AG04449 (cell line): ENCODE measurements at regions of chr20 and their contacts with region 1.

Region 1: DNA sequence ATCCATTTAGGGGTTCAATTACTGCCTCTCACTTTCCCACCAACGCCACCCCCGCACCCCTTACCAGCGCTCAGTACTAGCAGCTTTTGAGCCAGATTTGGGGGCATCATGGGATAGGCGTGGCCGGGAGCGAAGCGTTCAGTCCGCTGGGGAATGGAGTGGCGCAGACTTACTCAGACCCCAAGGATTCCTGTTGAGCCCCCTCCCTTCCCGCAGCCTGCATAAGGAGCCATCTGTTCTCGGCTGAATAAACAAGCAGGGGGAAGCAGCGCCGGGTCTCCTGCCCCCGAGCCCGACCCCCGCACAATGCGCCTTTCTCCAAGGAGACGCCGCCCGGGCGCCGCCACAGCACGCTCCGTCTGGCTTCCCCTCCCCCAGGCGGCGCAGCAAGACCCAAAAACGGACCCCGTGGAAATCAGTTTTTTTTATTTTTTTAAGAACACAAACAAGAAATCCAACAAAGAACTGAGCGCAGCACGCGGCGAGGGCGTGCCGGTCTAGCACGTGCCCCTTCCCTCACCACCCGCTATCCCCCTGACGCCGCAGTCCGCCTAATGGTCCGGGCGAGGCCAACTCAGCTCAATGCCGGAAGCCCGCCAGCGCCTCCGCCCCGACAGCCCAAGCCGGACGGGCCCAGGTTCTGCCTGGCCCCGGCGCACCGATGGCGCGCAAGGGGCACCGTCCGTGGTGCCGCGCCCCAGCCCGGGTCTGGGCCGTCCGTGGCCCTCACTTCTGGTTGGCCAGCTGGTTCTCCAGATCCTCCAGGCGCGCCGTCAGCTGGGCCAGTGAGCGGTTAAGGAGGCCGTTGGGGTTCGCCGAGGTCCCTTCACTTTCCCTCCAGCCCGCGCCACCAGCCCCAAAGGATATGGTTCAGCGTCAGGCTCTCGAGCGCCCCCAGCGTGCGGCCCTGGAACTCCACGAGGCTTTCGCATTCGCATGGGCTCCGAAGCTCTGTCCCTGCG is 13.3 kb upstream of the RBPJL start:
- DNase-seq: no peak
- H3K4me3 ChIP-seq: peak overlapping the region; percentile 61
- CTCF ChIP-seq: peak; percentile 98

Region 2: DNA sequence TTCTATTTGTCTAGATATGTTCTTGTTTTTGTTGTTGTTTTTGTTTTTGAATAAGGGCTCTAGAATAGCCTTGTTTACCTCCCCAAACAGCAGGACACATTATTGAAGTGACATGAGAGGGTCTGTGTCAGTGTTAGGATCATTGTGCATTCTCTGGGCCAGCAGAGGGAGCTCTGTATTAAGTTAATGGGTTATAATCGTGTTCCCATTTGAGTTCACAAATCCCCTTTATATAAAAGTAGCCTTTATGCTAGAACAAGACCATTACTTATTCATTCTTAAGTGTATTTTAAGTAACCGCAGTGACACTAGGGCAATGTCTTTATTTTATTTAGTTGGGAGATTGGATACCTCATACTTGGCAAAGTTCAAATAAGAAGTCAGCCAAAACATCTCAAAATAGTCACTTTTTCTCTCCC is 282.2 kb before region 1 on chr20:
- CTCF ChIA-PET with region 1: interaction called, 115 read pairs
- POLR2A ChIA-PET with region 1: no interaction called
- DNase-seq: no peak
- H3K4me3 ChIP-seq: no peak overlapping the region
- CTCF ChIP-seq: peak; percentile 54

Region 3: GRCh38 chr20:45095753-45096371 is 197.5 kb before region 1 on chr20:
- CTCF ChIA-PET with region 1: interaction called, 146 read pairs
- POLR2A ChIA-PET with region 1: no interaction called
- DNase-seq: peak; percentile 7
- H3K4me3 ChIP-seq: no peak overlapping the region
- CTCF ChIP-seq: peak; percentile 79

Region 4: DNA sequence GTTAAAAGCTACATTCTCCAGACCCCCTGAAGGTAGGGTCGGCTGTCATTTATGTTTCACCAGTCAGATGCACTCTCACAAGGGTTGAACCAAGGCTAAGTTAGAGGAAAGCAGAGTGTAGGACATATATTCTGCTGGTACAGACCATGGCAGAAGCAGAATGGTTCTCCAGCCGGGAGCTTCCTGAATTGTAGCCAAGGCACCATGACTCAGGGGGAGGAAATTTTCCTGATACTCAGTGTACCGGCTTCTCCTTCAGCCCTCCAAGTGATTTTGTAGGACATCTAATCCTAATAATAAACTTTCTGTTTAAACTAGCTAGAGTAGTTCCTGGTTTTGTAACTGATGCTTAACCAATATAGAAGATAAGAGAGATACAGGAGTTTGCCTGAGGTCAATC is 24.8 kb before region 1 on chr20:
- CTCF ChIA-PET with region 1: interaction called, 57 read pairs
- POLR2A ChIA-PET with region 1: no interaction called
- DNase-seq: no peak
- H3K4me3 ChIP-seq: no peak overlapping the region
- CTCF ChIP-seq: no peak

Region 5: DNA sequence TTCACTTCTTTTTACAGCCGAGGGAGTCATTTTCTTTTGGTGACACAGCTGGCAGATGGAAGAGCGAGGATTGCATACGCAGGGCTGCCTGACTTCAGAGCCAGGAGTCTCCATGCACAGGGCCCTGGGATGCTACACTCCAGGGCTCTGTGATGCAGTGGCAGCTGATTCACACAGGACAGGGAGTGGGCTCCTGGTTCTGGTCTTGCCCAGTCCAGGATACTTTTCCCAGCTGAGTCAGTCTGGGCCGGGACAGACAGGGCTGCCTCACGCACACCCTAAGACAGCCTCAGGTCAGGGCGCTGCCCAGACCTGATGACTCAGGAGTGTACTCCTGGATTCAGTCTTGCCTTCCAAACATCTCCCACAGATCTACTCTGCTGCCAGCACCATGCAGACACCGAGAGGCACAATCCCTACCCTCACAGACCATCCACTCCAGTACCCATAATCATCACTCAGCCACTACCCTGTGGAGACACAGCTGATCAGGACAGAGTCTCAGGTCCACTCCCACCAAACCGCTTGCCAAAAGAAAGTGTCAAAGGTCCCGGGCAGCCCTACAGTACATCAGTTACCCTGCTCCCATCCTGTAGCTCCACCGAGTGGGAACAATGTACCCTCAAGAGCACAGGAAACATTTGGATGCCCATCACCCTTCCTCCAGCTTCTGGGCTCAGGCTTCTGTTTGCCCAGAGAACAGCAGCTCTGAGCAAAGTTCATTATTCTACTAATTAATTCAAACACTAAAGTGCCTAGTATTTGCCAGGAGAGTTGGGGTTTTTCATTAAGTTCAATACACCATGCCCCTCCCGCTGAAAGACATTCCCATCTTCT is 43.4 kb after region 1 on chr20:
- CTCF ChIA-PET with region 1: interaction called, 10 read pairs
- POLR2A ChIA-PET with region 1: no interaction called
- DNase-seq: peak; percentile 77
- H3K4me3 ChIP-seq: no peak overlapping the region
- CTCF ChIP-seq: no peak

Region 6: GRCh38 chr20:45347297-45347935 is 54.1 kb after region 1 on chr20:
- CTCF ChIA-PET with region 1: no interaction called
- POLR2A ChIA-PET with region 1: no interaction called
- DNase-seq: no peak
- H3K4me3 ChIP-seq: peak overlapping the region; percentile 84
- CTCF ChIP-seq: no peak

Region 7: DNA sequence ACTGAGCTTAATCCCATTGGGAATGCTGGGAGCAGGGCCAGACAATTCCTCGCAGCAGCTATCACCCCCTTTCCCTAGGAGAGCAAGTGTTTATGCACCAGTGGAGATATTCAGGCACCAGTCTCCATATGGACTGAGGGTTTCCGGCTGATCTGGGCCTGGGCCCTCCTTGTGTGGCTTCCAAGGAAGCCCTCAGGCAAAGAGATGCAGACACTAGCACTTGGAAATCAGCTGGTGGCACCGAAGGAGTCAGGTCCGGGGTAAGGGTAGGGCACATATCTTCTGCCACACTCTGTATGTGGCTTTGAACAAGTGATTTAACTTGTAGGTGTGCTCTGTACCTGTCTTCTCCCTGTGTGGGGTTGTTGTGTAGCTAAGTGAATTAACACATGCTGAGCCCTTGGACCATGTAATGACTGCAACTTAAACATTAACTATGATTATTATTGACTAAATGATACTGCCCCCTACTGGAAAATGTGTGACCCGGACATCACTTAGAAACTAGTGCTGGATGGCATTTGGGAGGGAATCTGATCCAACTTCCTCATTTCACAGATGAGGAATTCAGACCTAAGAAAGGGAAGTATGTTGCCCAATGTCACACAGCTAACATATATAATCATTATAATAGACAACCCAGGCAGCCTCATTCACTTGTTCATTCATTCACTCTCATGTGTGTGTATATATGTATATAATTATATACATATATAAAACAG is 156.9 kb after region 1 on chr20:
- CTCF ChIA-PET with region 1: interaction called, 15 read pairs
- POLR2A ChIA-PET with region 1: no interaction called
- DNase-seq: no peak
- H3K4me3 ChIP-seq: no peak overlapping the region
- CTCF ChIP-seq: peak; percentile 49